HCT116 (cell line): ENCODE measurements at regions of chr10 and their contacts with region 1.

Region 1: DNA sequence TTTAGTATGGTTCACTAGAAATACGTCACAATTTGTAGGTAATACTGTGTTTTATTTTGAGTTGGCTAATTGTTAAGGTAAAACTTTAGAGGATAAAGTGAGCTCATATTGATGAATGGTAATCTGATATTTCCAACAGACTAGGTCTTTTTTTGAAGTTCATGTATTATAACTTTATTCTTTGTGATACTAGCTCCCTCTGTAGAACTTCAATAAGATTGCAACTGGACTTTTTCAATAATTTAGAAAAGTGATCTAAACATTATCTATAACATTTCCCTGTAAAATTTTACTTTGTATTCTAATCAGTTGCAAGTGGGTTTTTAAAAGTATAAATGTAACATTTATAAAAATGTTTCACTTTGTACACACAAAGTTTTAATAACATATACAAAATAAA is 83.5 kb downstream of the ADK start:
- DNase-seq: no peak
- ATAC-seq: no peak
- H3K4me3 ChIP-seq: no peak overlapping the region
- H3K27ac ChIP-seq: no peak overlapping the region
- H3K4me1 ChIP-seq: peaks cover 29 to 40% of the 10 kb centered on the region in 2 experiments
- H3K27me3 ChIP-seq: no peaks in the 10 kb centered on the region
- CTCF ChIP-seq: peak; percentile 12 to 69 (median 56); a peak in 4 of 6 replicates
- POLR2A ChIP-seq: no peak
- RAD21 ChIP-seq: peak; percentile 78

Region 2: GRCh38 chr10:74096777-74097176 is 137.8 kb before region 1 on chr10:
- CTCF ChIA-PET with region 1: no interaction called
- POLR2A ChIA-PET with region 1: no interaction called
- RAD21 ChIA-PET with region 1: no interaction called
- intact Hi-C with region 1: no loop called
- DNase-seq: no peak
- ATAC-seq: no peak
- H3K4me3 ChIP-seq: no peak overlapping the region
- H3K27ac ChIP-seq: no peak overlapping the region
- H3K4me1 ChIP-seq: no peaks in the 10 kb centered on the region
- H3K27me3 ChIP-seq: no peaks in the 10 kb centered on the region
- CTCF ChIP-seq: no peak
- POLR2A ChIP-seq: no peak
- RAD21 ChIP-seq: no peak

Region 3: DNA sequence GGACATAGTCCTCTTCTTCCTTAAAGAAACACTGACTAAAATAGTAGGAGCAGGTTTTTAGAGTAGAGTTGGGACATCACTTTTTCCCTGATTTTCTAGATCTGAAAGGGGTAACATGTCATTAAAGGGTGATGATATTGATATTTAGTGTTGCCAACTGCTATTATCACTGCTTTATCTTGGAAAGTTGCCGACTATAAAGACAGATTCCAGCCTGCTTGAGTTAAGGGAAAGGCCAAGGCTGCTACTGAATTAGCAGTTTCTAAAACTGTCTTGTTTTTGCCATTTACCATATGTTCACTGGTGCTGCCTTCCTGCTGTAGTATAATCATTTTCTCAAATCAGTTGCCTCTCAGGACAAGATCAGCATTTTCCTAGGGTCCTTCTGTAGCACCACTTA is 113.7 kb before region 1 on chr10:
- CTCF ChIA-PET with region 1: interaction called, 3 read pairs
- POLR2A ChIA-PET with region 1: no interaction called
- RAD21 ChIA-PET with region 1: no interaction called
- intact Hi-C with region 1: loop called (anchors 2 kb)
- DNase-seq: no peak
- ATAC-seq: no peak
- H3K4me3 ChIP-seq: no peak overlapping the region
- H3K27ac ChIP-seq: no peak overlapping the region
- H3K4me1 ChIP-seq: peaks cover 11 to 24% of the 10 kb centered on the region in 2 experiments
- H3K27me3 ChIP-seq: no peaks in the 10 kb centered on the region
- CTCF ChIP-seq: no peak
- POLR2A ChIP-seq: no peak
- RAD21 ChIP-seq: no peak

Region 4: GRCh38 chr10:74151056-74151878 is 83.3 kb before region 1 on chr10 and contains the start of gene ADK:
- CTCF ChIA-PET with region 1: interaction called, 4 read pairs
- POLR2A ChIA-PET with region 1: interaction called, 6 read pairs
- RAD21 ChIA-PET with region 1: no interaction called
- intact Hi-C with region 1: loop called (anchors 5 kb)
- DNase-seq: peak; percentile 96
- ATAC-seq: peak; percentile 92
- H3K4me3 ChIP-seq: peak within 1 kb of the TSS; percentile 82 to 85
- H3K27ac ChIP-seq: peak within 1 kb of the TSS; percentile 89
- H3K4me1 ChIP-seq: peaks cover 13 to 22% of the 10 kb centered on the region in 2 experiments
- H3K27me3 ChIP-seq: no peaks in the 10 kb centered on the region
- CTCF ChIP-seq: peak in 2 of 3 experiments; percentile 15 to 16; a peak in 1 of 6 replicates
- POLR2A ChIP-seq: peak; percentile 40
- RAD21 ChIP-seq: peak; percentile 17; the same call in 1 of the 2 replicates
- total RNA-seq, gene ADK: 55.0 TPM